ENCODE measurements at regions of chr19 and their contacts with region 1.

Region 1: DNA sequence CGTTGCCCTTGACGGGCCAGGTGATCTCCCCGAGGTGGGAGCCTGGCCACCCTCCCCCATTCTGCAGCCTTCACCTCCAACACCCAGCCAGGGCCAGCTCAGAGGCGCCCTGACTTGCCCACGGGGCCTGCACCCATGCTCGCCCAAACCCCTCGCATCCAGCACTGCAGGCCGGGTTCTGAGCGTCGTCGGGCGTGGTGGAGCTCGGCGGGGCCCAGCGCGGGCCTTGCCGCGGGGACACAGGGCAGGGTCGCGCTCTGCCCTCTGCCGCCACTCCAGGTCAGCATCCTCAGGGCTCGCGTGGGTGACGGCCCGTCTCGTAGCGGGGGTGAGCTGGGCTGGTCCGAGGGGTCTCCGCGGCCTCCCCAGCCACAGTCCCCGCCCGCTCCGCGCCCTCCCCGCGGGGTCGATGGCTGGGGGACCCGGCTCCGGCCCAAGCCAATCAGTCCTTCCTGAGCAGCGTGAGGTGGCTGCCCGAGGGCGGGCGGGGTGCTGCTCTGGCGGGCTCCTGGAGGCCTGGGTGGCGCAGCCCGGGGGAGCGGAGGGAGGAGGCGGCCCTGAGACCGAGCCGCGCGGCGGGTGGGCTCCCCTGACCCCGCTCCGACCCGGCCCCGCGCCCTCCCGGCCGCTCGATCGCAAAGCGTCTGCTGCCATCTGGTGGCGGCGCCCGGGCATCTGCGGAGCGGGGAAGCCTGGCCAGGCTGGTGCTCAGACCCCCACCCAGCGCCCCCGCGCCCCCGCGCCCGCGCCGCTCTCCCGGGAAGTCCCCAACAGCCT is 61.4 kb downstream of the CCNE1 start:
- DNase-seq: peak; percentile 72
- ATAC-seq: peak; percentile 93
- H3K4me3 Mint-ChIP-seq: peak overlapping the region; percentile 50
- H3K27ac Mint-ChIP-seq: no peak overlapping the region
- H3K4me1 Mint-ChIP-seq: peaks cover 16% of the 10 kb centered on the region
- H3K27me3 Mint-ChIP-seq: peaks cover 35% of the 10 kb centered on the region

Region 2: GRCh38 chr19:29731331-29731850 is 141.8 kb before region 1 on chr19:
- CTCF ChIA-PET with region 1: interaction called, 76 read pairs
- DNase-seq: no peak
- ATAC-seq: no peak
- H3K4me3 Mint-ChIP-seq: no peak overlapping the region
- H3K27ac Mint-ChIP-seq: no peak overlapping the region
- H3K4me1 Mint-ChIP-seq: no peaks in the 10 kb centered on the region
- H3K27me3 Mint-ChIP-seq: peaks cover 38% of the 10 kb centered on the region

Region 3: DNA sequence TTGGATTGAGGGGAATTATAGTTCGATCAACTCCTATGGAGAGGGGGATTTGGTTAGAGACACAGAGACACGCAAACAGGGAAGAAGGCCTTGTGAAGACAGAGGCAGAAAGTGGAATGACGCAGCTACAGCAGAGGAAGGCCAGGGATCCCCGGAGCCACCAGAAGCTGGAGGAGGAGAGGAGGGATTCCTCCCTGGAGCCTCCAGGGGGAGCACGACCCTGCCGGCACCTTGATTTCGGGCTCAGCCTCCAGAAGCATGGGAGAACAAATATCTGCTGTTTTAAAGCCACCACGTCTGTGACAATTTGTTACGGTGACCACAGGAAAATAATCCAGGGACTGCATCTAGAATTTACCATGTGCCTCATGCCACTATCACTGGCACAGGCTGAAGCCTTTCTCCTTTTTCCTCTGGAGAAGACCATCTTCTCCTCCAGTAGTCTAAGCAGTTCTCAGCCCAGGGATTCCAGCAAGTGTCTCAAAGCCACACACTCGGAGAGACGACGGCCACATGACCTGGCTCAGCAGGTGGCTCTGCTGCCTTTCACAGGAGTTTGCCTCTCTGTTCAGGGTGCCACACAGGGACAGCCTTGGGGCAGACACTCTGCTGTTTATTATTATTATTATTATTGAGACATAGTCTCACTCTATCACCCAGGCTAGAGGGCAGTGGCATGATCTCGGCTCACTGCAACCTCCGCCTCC is 101.4 kb before region 1 on chr19:
- CTCF ChIA-PET with region 1: interaction called, 10 read pairs
- DNase-seq: no peak
- ATAC-seq: no peak
- H3K4me3 Mint-ChIP-seq: no peak overlapping the region
- H3K27ac Mint-ChIP-seq: no peak overlapping the region
- H3K4me1 Mint-ChIP-seq: peaks cover 12% of the 10 kb centered on the region
- H3K27me3 Mint-ChIP-seq: peaks cover 12% of the 10 kb centered on the region

Region 4: DNA sequence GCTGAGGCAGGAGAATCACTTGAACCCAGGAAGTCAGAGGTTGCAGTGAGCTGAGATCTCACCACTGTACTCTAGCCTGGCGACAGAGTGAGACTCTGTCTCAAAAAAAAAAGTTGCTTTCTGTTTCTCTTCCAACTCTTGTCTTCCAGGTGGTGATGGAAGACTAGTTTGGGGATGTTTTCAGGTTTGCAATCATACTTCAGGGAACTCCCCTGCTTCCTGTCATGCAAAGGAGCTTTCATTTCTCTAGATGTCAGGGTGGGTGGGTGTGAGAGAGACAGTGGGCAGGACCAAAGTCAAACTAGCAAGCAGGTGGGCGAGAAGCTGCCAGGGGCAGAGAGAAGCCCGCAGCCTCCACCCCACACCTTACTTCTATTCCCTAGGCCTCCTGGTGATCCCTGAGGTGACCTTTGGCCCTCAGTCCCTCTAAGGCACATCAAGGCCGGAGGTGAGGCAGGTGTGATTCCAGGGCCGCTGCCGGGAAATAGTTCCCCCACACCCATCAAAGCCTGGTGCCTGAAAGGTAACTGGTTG is 35.7 kb before region 1 on chr19:
- CTCF ChIA-PET with region 1: interaction called, 11 read pairs
- DNase-seq: peak; percentile 59
- ATAC-seq: peak; percentile 59
- H3K4me3 Mint-ChIP-seq: peak overlapping the region; percentile 59
- H3K27ac Mint-ChIP-seq: peak overlapping the region; percentile 94
- H3K4me1 Mint-ChIP-seq: peaks cover 41% of the 10 kb centered on the region
- H3K27me3 Mint-ChIP-seq: peaks cover 16% of the 10 kb centered on the region

Region 5: DNA sequence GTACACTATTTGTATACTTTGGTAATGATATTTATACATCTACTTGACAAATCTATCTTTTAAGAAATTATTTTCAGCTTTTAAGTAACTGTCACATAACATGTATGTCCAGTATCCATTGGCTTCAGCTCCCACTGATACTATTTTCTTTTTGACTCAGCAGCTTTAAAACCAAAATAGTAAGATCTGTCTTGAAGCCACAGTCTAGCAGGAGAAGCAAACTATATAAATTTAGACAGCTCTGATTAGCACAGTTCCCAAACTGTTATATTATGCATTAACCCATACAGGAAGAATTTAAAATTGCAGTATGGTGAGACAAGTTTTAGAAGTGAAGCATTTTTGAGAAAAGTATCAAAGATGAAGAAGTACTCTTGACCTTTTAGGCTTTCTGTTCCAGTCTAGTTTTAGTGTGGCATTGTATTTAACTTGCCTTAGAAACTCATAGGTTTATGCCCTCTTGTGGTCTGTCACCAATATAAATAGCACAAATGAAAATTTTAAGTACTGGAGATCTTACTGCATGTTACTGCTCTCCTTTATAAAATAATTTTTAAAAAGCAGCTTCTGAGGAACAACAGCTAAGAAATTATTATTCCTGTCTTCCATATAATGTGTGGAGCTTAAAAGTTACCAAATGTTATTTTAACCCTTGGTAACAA is 93.5 kb after region 1 on chr19:
- CTCF ChIA-PET with region 1: no interaction called
- DNase-seq: no peak
- ATAC-seq: peak; percentile 23
- H3K4me3 Mint-ChIP-seq: no peak overlapping the region
- H3K27ac Mint-ChIP-seq: no peak overlapping the region
- H3K4me1 Mint-ChIP-seq: peaks cover 44% of the 10 kb centered on the region
- H3K27me3 Mint-ChIP-seq: no peaks in the 10 kb centered on the region